ENCODE measurements at regions of chr15 and their contacts with region 1.

Region 1: DNA sequence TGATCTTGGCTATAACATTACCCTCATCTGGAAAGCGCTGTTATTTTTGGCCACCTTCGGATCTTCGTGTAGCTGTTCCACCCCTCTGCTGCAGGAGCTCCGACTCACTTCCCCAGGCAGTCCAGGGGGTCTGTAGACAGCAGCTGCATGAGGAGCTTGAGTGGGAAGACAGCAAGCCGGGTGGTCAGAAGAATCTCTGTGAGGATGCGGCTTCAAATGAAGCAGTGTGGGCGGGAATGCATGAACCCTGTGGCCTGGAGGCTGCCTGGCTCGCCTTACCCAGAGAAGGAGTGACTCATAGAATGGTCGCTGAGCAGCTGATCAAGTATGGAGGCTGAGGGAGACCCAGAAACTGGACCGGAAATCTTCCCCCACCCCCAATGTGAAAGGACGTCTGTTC is 45.2 kb upstream of the NR2F2 start:
- DNase-seq: no peak

Region 2: GRCh38 chr15:95259513-95259912 is 1025.8 kb before region 1 on chr15:
- intact Hi-C with region 1: no loop called
- DNase-seq: peak; percentile 83

Region 3: GRCh38 chr15:96222981-96223380 is 62.3 kb before region 1 on chr15:
- intact Hi-C with region 1: loop called in 1 of 2 experiments (anchors 5 kb)
- DNase-seq: no peak

Measured in posterior vena cava (tissue), 2 donors.